ENCODE measurements at regions of chr11 and their contacts with region 1.

Region 1: DNA sequence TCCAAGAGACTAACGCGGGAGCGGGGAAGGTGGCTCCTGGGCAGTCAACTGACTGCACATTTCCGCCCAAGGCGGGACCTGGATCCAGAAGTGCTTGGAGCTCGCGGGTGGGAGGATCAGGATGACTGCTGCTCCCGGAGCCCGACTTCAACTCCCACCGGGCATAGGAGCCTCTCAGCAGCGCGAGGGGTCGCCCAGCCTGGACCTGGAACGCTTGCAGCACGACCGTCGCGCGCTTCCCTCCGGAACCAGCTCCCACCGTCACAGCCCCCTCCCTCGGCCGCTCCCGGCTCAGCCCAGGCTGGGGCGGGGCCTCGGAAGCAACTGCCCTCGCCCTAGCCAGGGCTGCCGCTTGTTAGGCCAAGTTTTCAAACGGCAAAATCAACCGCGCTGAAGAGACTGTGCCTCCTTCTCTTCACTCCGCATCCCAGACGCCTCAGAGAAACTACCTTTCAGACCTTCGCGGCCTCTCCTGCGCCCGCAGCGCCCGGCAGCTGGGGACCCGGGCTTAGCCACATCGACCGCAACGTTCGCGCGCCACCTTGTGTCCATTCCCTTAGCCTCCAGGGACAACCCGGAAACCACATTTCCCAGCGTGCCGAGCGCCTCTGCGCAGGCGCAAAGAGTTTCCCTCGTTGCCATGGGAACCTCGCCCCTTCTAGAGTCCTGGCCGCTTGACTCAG is 14.0 kb downstream of the SSH3 start:
- DNase-seq: peak; percentile 98
- H3K4me3 Mint-ChIP-seq: peak overlapping the region; percentile 97
- H3K27ac Mint-ChIP-seq: peak overlapping the region; percentile 98
- H3K4me1 Mint-ChIP-seq: peaks cover 48% of the 10 kb centered on the region
- H3K27me3 Mint-ChIP-seq: peaks cover 21% of the 10 kb centered on the region

Region 2: DNA sequence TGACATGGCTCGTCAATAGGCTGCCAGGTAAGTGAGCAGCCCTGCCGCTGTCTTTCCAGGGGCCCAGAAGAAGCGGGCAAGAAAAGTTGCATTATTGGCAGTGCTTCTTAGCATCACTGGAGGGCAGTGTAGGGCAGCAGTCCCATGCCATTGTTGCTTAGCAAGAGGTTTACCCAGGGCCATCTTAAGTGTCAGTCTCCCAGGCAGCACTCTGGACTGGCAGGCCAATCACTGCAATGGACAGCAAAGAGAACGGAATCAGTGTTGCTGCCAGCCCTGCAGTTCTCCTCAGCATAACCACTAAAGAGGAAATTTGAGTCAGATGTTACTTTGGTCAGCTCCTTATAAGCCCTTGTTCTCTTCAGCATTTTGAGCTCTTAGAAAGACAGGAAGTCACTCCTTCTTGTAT is 64.5 kb before region 1 on chr11:
- CTCF ChIA-PET with region 1: interaction called, 13 read pairs
- DNase-seq: peak; percentile 64
- H3K4me3 Mint-ChIP-seq: no peak overlapping the region
- H3K27ac Mint-ChIP-seq: peak overlapping the region; percentile 85
- H3K4me1 Mint-ChIP-seq: peaks cover 52% of the 10 kb centered on the region
- H3K27me3 Mint-ChIP-seq: no peaks in the 10 kb centered on the region

Region 3: GRCh38 chr11:67288452-67289225 is 28.7 kb before region 1 on chr11:
- CTCF ChIA-PET with region 1: interaction called, 12 read pairs
- DNase-seq: peak; percentile 94
- H3K4me3 Mint-ChIP-seq: peak overlapping the region; percentile 77
- H3K27ac Mint-ChIP-seq: peak overlapping the region; percentile 99
- H3K4me1 Mint-ChIP-seq: peaks cover 78% of the 10 kb centered on the region
- H3K27me3 Mint-ChIP-seq: peaks cover 12% of the 10 kb centered on the region

Region 4: GRCh38 chr11:67391304-67392132 is 74.2 kb after region 1 on chr11 and contains the start of gene RAD9A:
- CTCF ChIA-PET with region 1: no interaction called
- DNase-seq: peak; percentile 96
- H3K4me3 Mint-ChIP-seq: peak within 1 kb of the TSS; percentile 93
- H3K27ac Mint-ChIP-seq: peak within 1 kb of the TSS; percentile 56
- H3K4me1 Mint-ChIP-seq: peaks cover 44% of the 10 kb centered on the region
- H3K27me3 Mint-ChIP-seq: peaks cover 5% of the 10 kb centered on the region